ENCODE measurements at regions of chr5 and their contacts with region 1.

Region 1: GRCh38 chr5:177249761-177250526 is 53.6 kb downstream of the RAB24 start:
- DNase-seq: peak; percentile 62 to 73
- H3K4me3 ChIP-seq: no peak overlapping the region
- H3K27ac ChIP-seq: peak overlapping the region; percentile 37 to 79 (median 66)
- H3K4me1 ChIP-seq: peaks cover 11 to 15% of the 10 kb centered on the region in 2 donors
- H3K27me3 ChIP-seq: no peaks in the 10 kb centered on the region
- CTCF ChIP-seq: peak in 1 of 6 experiments; percentile 11
- POLR2A ChIP-seq: no peak

Region 2: DNA sequence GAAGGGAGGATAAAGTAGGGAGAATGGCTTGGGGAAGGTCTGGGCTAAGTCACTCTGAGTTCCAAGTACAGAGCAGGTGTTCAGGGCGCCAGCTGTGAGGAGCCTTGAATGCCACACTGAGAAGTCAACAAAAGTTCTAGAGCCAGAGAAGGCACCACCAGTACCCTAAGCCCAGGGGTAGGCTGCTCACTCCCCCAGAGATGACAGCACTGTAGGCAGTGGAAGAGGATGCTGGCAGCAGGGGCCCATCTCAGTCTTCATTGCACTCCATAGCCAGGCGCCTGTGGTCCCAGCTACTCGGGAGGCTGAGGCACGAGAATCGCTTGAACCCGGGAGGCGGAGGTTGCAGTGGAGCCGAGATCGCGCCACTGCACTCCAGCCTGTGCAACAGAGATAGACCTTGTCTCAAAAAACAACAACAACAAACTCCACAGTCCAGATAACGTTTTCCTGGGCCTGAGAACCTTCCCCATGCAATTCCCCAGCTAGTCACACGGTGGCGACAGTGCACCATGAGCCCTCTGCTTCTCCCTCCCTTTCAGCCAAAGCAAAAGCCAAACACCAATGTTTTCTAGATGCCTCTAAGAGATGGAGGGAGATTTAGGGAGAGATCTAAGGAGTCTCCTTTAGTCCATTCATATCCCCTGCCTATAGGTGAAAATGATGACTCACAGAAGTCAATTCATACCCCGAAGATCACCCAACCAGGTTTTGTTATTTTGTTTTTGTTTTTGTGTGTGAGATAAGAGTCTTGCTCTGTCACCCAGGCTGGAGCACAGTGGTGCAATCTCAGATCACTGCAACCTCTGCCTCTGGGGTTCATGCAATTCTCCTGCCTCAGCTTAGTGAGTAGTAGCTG is 136.1 kb before region 1 on chr5:
- intact Hi-C with region 1: loop called (anchors 10 kb)
- DNase-seq: peak; percentile 74 to 80
- H3K4me3 ChIP-seq: no peak overlapping the region
- H3K27ac ChIP-seq: no peak overlapping the region
- H3K4me1 ChIP-seq: peaks cover 0 to 17% of the 10 kb centered on the region in 2 donors
- H3K27me3 ChIP-seq: no peaks in the 10 kb centered on the region
- CTCF ChIP-seq: peak; percentile 98 to 99 (median 99)
- POLR2A ChIP-seq: no peak

Measured in thyroid gland (tissue), 4 donors.